PC-9 (cell line): ENCODE measurements at regions of chr3 and their contacts with region 1.

Region 1: GRCh38 chr3:138174421-138175122 is at the start of gene DBR1:
- DNase-seq: peak; percentile 61 to 76
- H3K4me3 ChIP-seq: peak within 1 kb of the TSS; percentile 88
- H3K27ac ChIP-seq: peak within 1 kb of the TSS; percentile 61
- H3K4me1 ChIP-seq: peaks cover 12% of the 10 kb centered on the region
- H3K27me3 ChIP-seq: no peaks in the 10 kb centered on the region
- CTCF ChIP-seq: no peak
- total RNA-seq, gene DBR1: 17.4 and 18.4 TPM in 2 replicates

Region 2: GRCh38 chr3:136350132-136350531 is 1824.4 kb before region 1 on chr3:
- CTCF ChIA-PET with region 1: no interaction called
- POLR2A ChIA-PET with region 1: interaction called, 16 read pairs
- intact Hi-C with region 1: no loop called
- DNase-seq: peak; percentile 71 to 77
- H3K4me3 ChIP-seq: no peak overlapping the region
- H3K27ac ChIP-seq: peak overlapping the region; percentile 74
- H3K4me1 ChIP-seq: peaks cover 14% of the 10 kb centered on the region
- H3K27me3 ChIP-seq: no peaks in the 10 kb centered on the region
- CTCF ChIP-seq: no peak

Region 3: DNA sequence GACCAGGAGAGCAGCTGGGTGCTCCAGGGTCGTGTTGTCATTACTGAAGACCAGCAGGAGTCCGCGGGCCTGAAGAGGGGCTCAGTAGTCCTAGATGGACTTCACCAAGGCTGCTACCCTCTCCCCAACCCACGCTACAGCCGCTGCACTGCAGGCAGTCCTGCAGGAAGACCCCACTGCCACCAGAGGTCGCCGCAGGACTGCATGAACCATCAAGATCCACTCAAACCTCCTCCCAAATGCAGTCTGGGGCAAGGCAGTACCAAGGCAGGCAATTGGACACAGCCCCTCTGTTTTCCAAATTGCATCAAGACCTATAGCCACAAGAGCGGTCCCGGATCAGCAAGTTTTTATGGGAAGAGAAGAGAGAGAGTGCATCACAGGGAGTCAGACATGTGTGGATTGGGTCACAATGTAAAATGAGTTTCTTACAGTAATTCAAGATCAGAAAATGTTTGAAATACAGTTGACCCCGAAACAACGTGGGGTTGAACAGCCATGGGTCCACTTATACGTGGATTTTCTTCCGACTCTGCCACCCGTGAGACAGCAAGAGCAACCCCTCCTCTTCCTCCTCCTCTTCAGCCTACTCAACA is 105.9 kb before region 1 on chr3:
- CTCF ChIA-PET with region 1: no interaction called
- POLR2A ChIA-PET with region 1: no interaction called
- intact Hi-C with region 1: loop called (anchors 1 kb)
- DNase-seq: peak in 1 of 2 experiments; percentile 72
- H3K4me3 ChIP-seq: no peak overlapping the region
- H3K27ac ChIP-seq: no peak overlapping the region
- H3K4me1 ChIP-seq: no peaks in the 10 kb centered on the region
- H3K27me3 ChIP-seq: no peaks in the 10 kb centered on the region
- CTCF ChIP-seq: peak; percentile 97

Region 4: DNA sequence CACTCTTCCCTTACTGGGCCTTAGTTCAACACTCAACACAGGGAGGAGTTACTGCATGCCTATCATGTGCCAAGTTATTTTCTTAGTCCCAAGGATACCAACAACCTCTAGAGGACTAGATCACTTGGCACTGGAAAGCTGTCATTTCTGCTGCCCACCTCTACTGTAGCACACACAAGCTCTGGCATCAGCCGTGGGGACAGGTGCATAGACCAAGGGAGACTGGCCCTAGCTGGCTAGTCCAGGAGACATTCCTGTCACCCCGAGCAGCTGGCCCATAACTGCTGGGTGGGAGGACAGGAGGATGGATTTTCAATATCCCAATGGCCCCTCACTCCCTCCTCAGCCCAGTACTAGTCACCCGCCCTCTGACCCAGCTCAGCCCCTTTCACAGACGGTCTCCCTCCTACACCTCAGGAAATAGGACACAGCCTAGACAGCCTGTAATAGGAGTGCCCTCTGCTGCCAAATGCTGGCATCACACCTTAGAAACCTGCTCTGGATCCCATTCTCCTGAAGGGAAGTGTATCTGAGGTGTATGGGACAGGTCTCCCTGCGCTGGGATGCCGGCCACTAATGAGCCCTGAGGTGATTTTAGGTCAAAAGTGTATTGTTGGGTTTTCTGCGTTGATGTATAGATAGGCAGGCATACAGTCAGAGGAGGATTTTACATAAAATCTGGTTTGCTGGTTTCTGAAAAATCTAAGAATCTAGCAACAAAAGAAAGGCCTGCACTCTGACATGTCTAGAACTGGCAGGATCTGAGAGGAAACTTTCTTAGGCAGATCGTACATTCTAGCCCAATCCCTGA is 55.8 kb before region 1 on chr3:
- CTCF ChIA-PET with region 1: interaction called, 3 read pairs
- POLR2A ChIA-PET with region 1: no interaction called
- intact Hi-C with region 1: loop called (anchors 2 kb)
- DNase-seq: peak; percentile 56 to 79
- H3K4me3 ChIP-seq: no peak overlapping the region
- H3K27ac ChIP-seq: no peak overlapping the region
- H3K4me1 ChIP-seq: peaks cover 9% of the 10 kb centered on the region
- H3K27me3 ChIP-seq: no peaks in the 10 kb centered on the region
- CTCF ChIP-seq: peak; percentile 91

Region 5: DNA sequence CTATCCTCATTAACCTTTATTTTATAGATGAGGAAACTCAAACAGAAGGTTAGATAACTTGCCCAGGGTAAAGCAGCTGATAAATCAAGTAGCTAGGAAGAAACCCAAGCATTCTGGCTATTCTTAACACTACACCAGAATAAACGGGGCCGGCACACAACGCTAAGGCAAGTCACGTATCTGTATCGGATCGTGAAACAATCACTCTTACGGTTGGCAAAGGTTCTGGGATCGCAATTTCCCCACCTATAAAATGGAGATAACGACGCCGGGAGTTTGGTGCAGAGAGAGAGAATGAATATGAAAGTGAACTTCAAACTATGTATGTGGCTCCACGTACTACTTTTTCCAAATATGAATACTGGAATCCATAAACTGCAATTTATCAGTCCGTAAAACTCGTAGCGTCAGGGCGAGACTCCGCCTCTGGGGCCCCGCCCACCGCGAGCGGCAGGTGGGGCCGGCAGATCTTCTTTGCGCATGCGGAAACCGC is 12.3 kb after region 1 on chr3:
- CTCF ChIA-PET with region 1: interaction called, 4 read pairs
- POLR2A ChIA-PET with region 1: interaction called, 12 read pairs
- intact Hi-C with region 1: loop called (anchors 1 kb)
- DNase-seq: peak in 1 of 2 experiments; percentile 88
- H3K4me3 ChIP-seq: peak overlapping the region; percentile 90
- H3K27ac ChIP-seq: peak overlapping the region; percentile 76
- H3K4me1 ChIP-seq: peaks cover 28% of the 10 kb centered on the region
- H3K27me3 ChIP-seq: no peaks in the 10 kb centered on the region
- CTCF ChIP-seq: no peak

Region 6: GRCh38 chr3:138296639-138297038 is 122.1 kb after region 1 on chr3:
- CTCF ChIA-PET with region 1: no interaction called
- POLR2A ChIA-PET with region 1: no interaction called
- intact Hi-C with region 1: no loop called
- DNase-seq: no peak
- H3K4me3 ChIP-seq: no peak overlapping the region
- H3K27ac ChIP-seq: no peak overlapping the region
- H3K4me1 ChIP-seq: no peaks in the 10 kb centered on the region
- H3K27me3 ChIP-seq: no peaks in the 10 kb centered on the region
- CTCF ChIP-seq: no peak

Region 7: DNA sequence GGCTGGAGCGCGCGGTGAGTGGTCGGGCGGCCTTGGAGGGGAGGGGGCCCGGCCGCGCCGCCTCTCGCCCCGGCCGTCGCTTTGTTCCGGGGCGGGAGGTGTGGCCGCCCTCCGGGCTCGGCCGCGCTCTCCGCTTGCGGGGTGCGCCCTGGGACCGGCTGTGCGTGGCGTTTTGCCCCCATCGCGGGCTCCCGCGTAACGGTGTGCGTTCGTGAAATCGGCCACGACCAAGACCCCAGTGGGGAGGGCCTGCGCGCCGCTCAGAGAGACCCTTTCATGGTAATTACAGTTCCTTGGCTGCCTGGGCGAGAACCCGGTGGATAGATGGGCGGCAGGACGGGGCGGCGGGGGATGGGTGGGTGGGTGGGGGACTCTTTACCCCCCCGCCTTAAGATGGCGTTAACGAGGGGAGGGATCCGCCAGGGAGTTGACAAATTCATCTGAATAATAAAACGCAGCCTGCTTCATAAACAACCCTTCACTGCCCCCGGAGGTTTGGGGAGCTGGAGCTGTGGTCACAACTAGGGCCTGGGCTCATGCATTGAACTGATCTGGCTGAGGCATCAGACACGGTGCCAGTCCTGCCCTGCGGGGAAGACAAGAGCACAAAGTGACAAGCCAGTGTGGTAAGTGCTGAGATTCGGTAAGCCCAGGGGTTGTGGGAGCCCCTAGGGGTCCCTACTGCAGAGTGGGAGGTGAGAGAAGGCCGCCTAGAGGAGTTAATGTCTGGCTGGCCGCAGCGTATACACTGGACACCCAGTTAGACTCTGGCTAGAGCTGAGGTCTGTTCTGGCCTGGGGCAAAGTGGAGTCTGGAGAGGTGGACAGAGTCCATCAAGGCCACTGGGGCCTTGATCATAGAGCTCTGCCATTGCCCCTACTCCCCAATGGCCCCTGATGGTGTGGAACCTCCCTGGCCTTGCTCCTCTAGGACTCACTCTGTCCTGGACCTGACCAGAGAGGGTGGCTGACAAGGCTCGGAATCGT is 174.5 kb after region 1 on chr3:
- CTCF ChIA-PET with region 1: no interaction called
- POLR2A ChIA-PET with region 1: interaction called, 19 read pairs
- intact Hi-C with region 1: no loop called
- DNase-seq: no peak
- H3K4me3 ChIP-seq: peak overlapping the region; percentile 65; the same call in 1 of the 2 replicates
- H3K27ac ChIP-seq: no peak overlapping the region
- H3K4me1 ChIP-seq: no peaks in the 10 kb centered on the region
- H3K27me3 ChIP-seq: peaks cover 3% of the 10 kb centered on the region; the same call in 1 of the 2 replicates
- CTCF ChIP-seq: no peak